ENCODE measurements at regions of chr20 and their contacts with region 1.

Region 1: DNA sequence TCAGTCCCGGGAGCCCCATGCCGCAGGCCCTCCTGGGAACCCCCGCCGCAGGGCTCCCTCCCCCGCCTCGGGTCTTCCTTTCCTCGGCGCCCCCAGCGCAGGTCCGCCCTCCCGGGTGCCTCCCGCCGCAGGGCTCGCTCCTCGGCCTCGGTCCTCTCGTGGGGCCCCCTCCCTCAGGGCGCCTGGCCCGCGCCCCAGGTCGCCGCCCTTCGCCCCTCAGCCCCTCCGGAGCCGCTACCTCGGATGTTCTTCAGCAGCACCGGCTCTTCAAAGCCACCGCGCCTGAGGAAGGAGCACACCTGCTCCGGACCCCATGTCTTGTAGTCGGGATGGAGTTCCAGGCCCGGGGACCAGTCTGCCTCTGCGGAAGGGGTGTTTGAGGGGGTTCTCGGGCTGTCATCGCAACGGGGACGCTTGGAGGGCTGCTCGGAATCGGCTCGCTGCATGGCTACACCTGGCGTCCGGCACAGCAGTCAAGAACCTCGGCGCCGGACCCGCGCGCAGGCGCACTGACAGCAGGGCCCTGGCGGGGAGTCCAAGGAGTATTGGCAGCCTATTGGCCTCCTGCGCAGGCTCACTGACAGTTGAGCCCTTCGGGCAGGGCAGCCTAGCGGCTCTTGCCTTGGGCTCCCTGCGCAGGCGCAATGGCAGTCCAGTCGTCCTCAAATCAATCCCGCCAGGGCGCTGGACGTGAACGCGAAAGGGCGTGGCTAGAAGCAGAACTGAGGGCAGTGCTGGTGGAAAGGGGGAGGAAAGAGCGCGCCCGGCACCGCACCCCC is at the start of gene SAMHD1:
- DNase-seq: peak; percentile 100
- ATAC-seq: peak; percentile 93
- H3K4me3 ChIP-seq: peak within 1 kb of the TSS; percentile 86 to 98 (median 88)
- H3K27ac ChIP-seq: peak within 1 kb of the TSS; percentile 76
- H3K4me1 ChIP-seq: peaks cover 72% of the 10 kb centered on the region
- H3K27me3 ChIP-seq: no peaks in the 10 kb centered on the region; a peak in 1 of 5 replicates
- CTCF ChIP-seq: peak; percentile 26; the same call in 1 of the 2 replicates
- EP300 ChIP-seq: no peak
- POLR2A ChIP-seq: peak; percentile 83 to 95
- RAD21 ChIP-seq: peak; percentile 42; the same call in 1 of the 2 replicates
- total RNA-seq, gene SAMHD1: 43.5 and 57.7 TPM in 2 replicates

Region 2: GRCh38 chr20:36936341-36936740 is 15.0 kb before region 1 on chr20:
- CTCF ChIA-PET with region 1: no interaction called
- POLR2A ChIA-PET with region 1: no interaction called
- in situ Hi-C with region 1: no loop called
- intact Hi-C with region 1: no loop called
- DNase-seq: no peak
- ATAC-seq: no peak
- H3K4me3 ChIP-seq: no peak overlapping the region
- H3K27ac ChIP-seq: no peak overlapping the region
- H3K4me1 ChIP-seq: peaks cover 37% of the 10 kb centered on the region
- H3K27me3 ChIP-seq: no peaks in the 10 kb centered on the region
- CTCF ChIP-seq: no peak
- EP300 ChIP-seq: no peak
- POLR2A ChIP-seq: no peak
- RAD21 ChIP-seq: no peak

Region 3: DNA sequence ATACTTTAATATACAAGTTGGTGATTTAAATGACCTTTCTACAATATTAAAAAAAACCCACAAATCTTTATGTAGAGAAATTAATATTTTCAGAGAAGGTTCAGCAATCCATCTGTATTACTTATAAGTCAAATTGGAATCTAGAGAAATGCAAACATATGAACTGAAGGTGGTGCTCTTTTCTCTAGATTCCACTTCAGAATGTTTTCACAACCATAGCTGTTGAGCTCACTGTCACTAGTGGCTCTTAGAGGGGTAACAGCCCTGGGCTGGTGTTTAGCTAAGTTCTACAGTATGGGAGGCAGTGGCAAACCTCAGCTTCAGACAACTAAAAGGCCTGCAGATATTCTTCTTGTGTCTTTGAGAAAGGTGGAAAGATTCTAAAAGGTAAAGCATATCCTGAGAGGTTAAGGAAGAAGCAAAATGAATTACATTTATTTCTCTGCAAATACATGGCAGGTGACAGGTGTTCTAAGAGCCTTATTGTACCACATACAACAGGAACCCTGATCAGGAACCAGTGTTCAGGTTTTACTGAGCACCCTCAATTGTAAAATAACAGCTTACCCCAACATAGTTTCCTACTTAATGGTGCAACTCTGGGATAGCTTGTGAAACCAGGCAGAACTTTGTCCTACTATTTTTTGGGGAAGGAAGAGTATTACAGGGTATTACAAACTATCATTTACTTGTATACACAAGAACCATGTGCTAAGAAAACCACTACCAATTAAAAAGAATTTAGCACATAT is 56.7 kb after region 1 on chr20:
- CTCF ChIA-PET with region 1: no interaction called
- POLR2A ChIA-PET with region 1: no interaction called
- in situ Hi-C with region 1: no loop called
- intact Hi-C with region 1: no loop called
- DNase-seq: peak; percentile 40
- ATAC-seq: peak; percentile 86
- H3K4me3 ChIP-seq: no peak overlapping the region
- H3K27ac ChIP-seq: no peak overlapping the region
- H3K4me1 ChIP-seq: no peaks in the 10 kb centered on the region
- H3K27me3 ChIP-seq: no peaks in the 10 kb centered on the region
- CTCF ChIP-seq: no peak
- EP300 ChIP-seq: no peak
- POLR2A ChIP-seq: no peak
- RAD21 ChIP-seq: no peak

Region 4: GRCh38 chr20:37095599-37096414 is 144.4 kb after region 1 on chr20 and contains the start of gene RBL1:
- CTCF ChIA-PET with region 1: no interaction called
- POLR2A ChIA-PET with region 1: interaction called, 3 read pairs
- in situ Hi-C with region 1: no loop called
- intact Hi-C with region 1: loop called (anchors 10 kb)
- DNase-seq: peak; percentile 88
- ATAC-seq: peak; percentile 90
- H3K4me3 ChIP-seq: peak within 1 kb of the TSS; percentile 70 to 82 (median 71)
- H3K27ac ChIP-seq: peak within 1 kb of the TSS; percentile 79
- H3K4me1 ChIP-seq: peaks cover 34% of the 10 kb centered on the region
- H3K27me3 ChIP-seq: no peaks in the 10 kb centered on the region; a peak in 1 of 5 replicates
- CTCF ChIP-seq: peak; percentile 50
- EP300 ChIP-seq: peak; percentile 27 to 81; a peak in 3 of 4 replicates
- POLR2A ChIP-seq: peak; percentile 84 to 85
- RAD21 ChIP-seq: peak; percentile 77
- total RNA-seq, gene RBL1: 25.9 and 27.5 TPM in 2 replicates

Measured in HepG2 (cell line).